Naive thymus-derived CD4-positive, alpha-beta T cell (primary cell): ENCODE measurements at regions of chr14 and their contacts with region 1.

Region 1: DNA sequence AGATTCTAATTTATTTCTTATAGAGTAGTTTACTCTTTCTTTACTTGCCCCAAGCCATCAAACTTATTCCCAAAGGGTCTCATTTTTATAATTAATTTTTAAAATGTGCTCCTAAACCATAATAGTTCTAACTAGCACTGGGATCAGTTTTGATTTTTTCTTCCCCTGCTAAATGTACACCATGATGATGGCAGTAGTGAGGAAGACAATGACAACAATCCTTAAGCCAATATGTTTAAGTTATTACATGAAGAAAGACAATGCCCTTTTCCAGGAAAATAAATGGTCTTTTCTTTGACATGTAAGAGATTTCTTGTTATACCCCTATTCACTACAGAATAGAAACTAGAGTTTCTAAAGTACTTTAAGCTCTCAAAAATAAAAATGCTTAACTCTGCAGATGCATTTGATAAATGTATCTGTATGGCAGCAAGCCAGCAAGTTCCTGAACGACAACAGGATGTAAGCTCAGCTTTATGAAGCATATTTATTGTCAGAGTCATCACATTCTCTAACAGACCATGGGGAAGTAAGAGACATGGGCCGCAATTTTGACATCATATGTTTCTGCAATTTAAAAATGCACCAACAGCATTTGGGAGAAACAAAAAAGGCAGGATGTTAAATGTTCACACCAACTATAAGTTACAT is 36.0 kb upstream of the SNX6 start:
- DNase-seq: peak in 7 of 9 donors; percentile 5 to 64 (median 45)
- ATAC-seq: peak; percentile 65
- H3K4me3 ChIP-seq: no peak overlapping the region
- H3K4me3 Mint-ChIP-seq: peak overlapping the region in 7 of 10 donors; percentile 17 to 63 (median 52)
- H3K27ac ChIP-seq: no peak overlapping the region
- H3K27ac Mint-ChIP-seq: peak overlapping the region; percentile 21 to 85 (median 70)
- H3K4me1 ChIP-seq: peaks cover 3 to 4% of the 10 kb centered on the region in 2 donors
- H3K4me1 Mint-ChIP-seq: peaks cover 5 to 14% (median 12%) of the 10 kb centered on the region in 7 donors
- H3K27me3 ChIP-seq: no peaks in the 10 kb centered on the region
- H3K27me3 Mint-ChIP-seq: peaks cover 0 to 16% (median 0%) of the 10 kb centered on the region in 5 donors

Region 2: GRCh38 chr14:34003691-34004090 is 662.2 kb before region 1 on chr14:
- CTCF ChIA-PET with region 1: no interaction called
- POLR2A ChIA-PET with region 1: no interaction called
- intact Hi-C with region 1: no loop called
- DNase-seq: no peak
- ATAC-seq: no peak
- H3K4me3 ChIP-seq: no peak overlapping the region
- H3K4me3 Mint-ChIP-seq: no peak overlapping the region
- H3K27ac ChIP-seq: no peak overlapping the region
- H3K27ac Mint-ChIP-seq: no peak overlapping the region
- H3K4me1 ChIP-seq: no peaks in the 10 kb centered on the region
- H3K4me1 Mint-ChIP-seq: peaks cover 0 to 20% (median 0%) of the 10 kb centered on the region in 7 donors
- H3K27me3 ChIP-seq: no peaks in the 10 kb centered on the region
- H3K27me3 Mint-ChIP-seq: peaks cover 0 to 61% (median 0%) of the 10 kb centered on the region in 5 donors

Region 3: GRCh38 chr14:34136996-34137745 is 528.7 kb before region 1 on chr14:
- CTCF ChIA-PET with region 1: no interaction called
- POLR2A ChIA-PET with region 1: no interaction called
- intact Hi-C with region 1: no loop called
- DNase-seq: no peak
- ATAC-seq: no peak
- H3K4me3 ChIP-seq: no peak overlapping the region
- H3K4me3 Mint-ChIP-seq: no peak overlapping the region
- H3K27ac ChIP-seq: no peak overlapping the region
- H3K27ac Mint-ChIP-seq: no peak overlapping the region
- H3K4me1 ChIP-seq: no peaks in the 10 kb centered on the region
- H3K4me1 Mint-ChIP-seq: no peaks in the 10 kb centered on the region
- H3K27me3 ChIP-seq: no peaks in the 10 kb centered on the region
- H3K27me3 Mint-ChIP-seq: peaks cover 0 to 9% (median 8%) of the 10 kb centered on the region in 5 donors

Region 4: DNA sequence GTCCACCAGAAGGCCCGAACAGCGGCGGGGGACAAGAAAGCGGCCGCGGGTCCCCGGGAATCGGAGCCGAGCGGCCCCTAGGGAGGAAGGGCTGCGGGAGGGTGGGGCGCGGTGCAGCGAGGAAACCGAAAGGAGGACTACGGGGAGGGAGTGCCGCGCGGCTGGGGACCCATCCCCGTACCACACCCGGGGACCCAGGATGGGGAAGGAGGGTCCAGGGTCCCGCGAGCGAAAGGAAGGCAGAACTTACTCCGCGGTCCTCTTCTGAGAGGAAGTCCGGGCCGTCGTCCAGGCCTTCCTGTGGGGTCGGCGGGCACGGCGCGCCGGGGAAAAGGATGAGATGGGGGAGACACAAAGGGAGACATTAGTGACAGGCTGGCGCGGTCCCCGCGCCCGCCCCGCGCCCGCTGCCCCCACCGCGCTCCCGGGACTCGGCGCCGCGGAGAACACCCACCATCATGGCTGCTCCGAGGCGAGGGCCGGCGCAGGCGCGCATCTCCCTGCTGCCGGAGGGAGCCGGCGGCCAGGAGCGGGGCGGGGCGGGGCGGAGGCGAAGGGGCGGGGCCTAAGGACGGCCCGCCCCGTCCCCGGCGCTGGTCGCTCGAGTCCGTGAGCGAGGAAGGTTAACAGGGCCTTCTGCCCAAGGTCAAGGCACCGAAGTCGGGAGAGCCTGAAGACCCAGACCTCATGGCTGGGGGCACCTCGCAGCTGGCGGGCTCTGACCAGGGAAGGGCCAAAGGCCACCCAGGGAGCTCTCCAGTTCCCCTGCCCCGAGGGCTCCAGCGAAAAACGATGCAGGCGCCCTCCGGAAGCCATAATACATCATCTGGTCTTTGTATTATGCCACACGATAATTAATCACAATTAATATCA is 36.0 kb before region 1 on chr14 and contains the start of gene SNX6:
- CTCF ChIA-PET with region 1: interaction called, 4 read pairs
- POLR2A ChIA-PET with region 1: interaction called, 3 read pairs
- intact Hi-C with region 1: loop called in 1 of 2 experiments (anchors 1 kb)
- DNase-seq: peak; percentile 75 to 87 (median 83)
- ATAC-seq: peak; percentile 100
- H3K4me3 ChIP-seq: peak within 1 kb of the TSS; percentile 72
- H3K4me3 Mint-ChIP-seq: peak within 1 kb of the TSS; percentile 89 to 100 (median 98)
- H3K27ac ChIP-seq: peak within 1 kb of the TSS; percentile 98
- H3K27ac Mint-ChIP-seq: peak within 1 kb of the TSS; percentile 92 to 97 (median 96)
- H3K4me1 ChIP-seq: peaks cover 17 to 20% of the 10 kb centered on the region in 2 donors
- H3K4me1 Mint-ChIP-seq: peaks cover 6 to 49% (median 33%) of the 10 kb centered on the region in 7 donors
- H3K27me3 ChIP-seq: no peaks in the 10 kb centered on the region
- H3K27me3 Mint-ChIP-seq: peaks cover 0 to 18% (median 0%) of the 10 kb centered on the region in 5 donors
- total RNA-seq, gene SNX6: 56.6 to 78.9 (median 59.7) TPM

Region 5: DNA sequence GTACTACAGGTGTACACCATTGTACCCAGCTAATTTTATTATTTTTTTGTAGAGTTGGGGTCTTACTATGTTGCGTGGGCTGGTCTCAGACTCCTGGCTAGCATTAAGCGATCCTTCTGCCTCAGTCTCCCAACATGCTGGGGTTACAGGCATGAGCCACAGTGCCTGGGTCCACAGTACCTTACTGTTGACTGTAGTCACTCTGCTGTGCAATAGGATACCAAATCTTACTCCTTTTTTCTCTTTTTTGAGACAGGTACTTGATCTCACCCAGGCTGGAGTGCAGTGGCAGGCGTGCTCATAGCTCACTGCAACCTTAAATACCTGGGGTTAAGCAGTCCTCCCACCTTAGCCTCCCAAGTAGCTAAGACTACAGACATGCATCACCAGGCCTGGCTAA is 651.9 kb after region 1 on chr14:
- CTCF ChIA-PET with region 1: no interaction called
- POLR2A ChIA-PET with region 1: no interaction called
- intact Hi-C with region 1: loop called in 1 of 2 experiments (anchors 10 kb)
- DNase-seq: no peak
- ATAC-seq: no peak
- H3K4me3 ChIP-seq: no peak overlapping the region
- H3K4me3 Mint-ChIP-seq: no peak overlapping the region
- H3K27ac ChIP-seq: no peak overlapping the region
- H3K27ac Mint-ChIP-seq: peak overlapping the region in 4 of 9 donors; percentile 5 to 59 (median 42)
- H3K4me1 ChIP-seq: no peaks in the 10 kb centered on the region
- H3K4me1 Mint-ChIP-seq: peaks cover 0 to 25% (median 0%) of the 10 kb centered on the region in 7 donors
- H3K27me3 ChIP-seq: no peaks in the 10 kb centered on the region
- H3K27me3 Mint-ChIP-seq: no peaks in the 10 kb centered on the region